ENCODE measurements at regions of chr9 and their contacts with region 1.

Region 1: GRCh38 chr9:136400038-136400834 is at the start of gene SNAPC4:
- DNase-seq: peak; percentile 77 to 91
- ATAC-seq: peak; percentile 89 to 95 (median 92)
- H3K4me3 ChIP-seq: peak within 1 kb of the TSS; percentile 77 to 99 (median 94)
- H3K27ac ChIP-seq: peak within 1 kb of the TSS in 9 of 10 donors; percentile 20 to 84 (median 62)
- H3K4me1 ChIP-seq: peaks cover 13 to 24% (median 18%) of the 10 kb centered on the region in 9 donors
- H3K27me3 ChIP-seq: no peaks in the 10 kb centered on the region
- CTCF ChIP-seq: peak; percentile 90 to 99 (median 97)
- total RNA-seq, gene SNAPC4: 3.4 to 6.1 (median 4.7) TPM

Region 2: GRCh38 chr9:136312436-136312835 is 87.8 kb before region 1 on chr9:
- intact Hi-C with region 1: loop called in 5 of 10 experiments (anchors 2 to 10 kb)
- DNase-seq: peak in 1 of 2 donors; percentile 56
- ATAC-seq: peak in 7 of 8 donors; percentile 71 to 82 (median 76)
- H3K4me3 ChIP-seq: no peak overlapping the region
- H3K27ac ChIP-seq: no peak overlapping the region
- H3K4me1 ChIP-seq: no peaks in the 10 kb centered on the region
- H3K27me3 ChIP-seq: peaks cover 0 to 34% (median 25%) of the 10 kb centered on the region in 7 donors
- CTCF ChIP-seq: peak; percentile 31 to 68 (median 61)

Region 3: DNA sequence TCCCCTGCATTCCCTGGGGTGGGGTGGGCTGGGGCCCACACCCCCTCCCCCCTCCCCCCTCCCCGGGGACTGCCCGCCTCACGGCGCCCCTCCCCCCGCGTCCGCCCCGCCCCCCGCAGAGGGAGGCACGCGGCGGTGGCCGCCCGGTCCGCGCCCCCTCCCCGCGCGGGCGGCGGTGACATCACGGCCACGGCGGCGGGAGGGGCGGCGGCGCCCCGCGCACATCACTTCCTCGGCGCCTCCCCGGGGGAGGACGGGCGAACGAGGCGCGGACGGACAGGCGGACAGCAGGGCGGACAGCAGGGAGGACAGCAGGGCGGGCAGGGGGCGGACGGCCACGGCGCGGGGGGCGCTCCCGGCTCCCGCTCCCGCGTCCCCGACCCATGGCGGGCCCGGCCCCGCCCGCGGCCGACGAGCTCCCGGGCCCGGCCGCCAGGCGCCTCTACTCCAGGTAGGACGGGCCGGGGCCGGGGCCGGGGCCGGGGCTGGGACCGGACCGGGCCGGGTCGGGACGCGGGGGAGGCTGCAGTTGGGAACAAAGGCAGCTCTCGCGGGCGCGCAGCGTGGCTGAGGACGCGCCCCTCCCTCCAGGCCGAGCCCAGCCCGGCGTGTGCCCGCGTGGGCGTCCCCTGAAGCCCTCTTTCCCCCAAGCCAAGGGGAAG is 72.8 kb before region 1 on chr9 and contains the start of gene GPSM1:
- intact Hi-C with region 1: loop called in 1 of 10 experiments (anchors 5 kb)
- DNase-seq: peak; percentile 66 to 73
- ATAC-seq: peak; percentile 2 to 54 (median 27)
- H3K4me3 ChIP-seq: peak within 1 kb of the TSS; percentile 55 to 91 (median 74)
- H3K27ac ChIP-seq: peak within 1 kb of the TSS; percentile 18 to 86 (median 83)
- H3K4me1 ChIP-seq: peaks cover 24 to 56% (median 39%) of the 10 kb centered on the region in 9 donors
- H3K27me3 ChIP-seq: peaks cover 0 to 23% (median 0%) of the 10 kb centered on the region in 7 donors
- CTCF ChIP-seq: no peak
- total RNA-seq, gene GPSM1: 19.4 to 50.2 (median 24.8) TPM

Region 4: DNA sequence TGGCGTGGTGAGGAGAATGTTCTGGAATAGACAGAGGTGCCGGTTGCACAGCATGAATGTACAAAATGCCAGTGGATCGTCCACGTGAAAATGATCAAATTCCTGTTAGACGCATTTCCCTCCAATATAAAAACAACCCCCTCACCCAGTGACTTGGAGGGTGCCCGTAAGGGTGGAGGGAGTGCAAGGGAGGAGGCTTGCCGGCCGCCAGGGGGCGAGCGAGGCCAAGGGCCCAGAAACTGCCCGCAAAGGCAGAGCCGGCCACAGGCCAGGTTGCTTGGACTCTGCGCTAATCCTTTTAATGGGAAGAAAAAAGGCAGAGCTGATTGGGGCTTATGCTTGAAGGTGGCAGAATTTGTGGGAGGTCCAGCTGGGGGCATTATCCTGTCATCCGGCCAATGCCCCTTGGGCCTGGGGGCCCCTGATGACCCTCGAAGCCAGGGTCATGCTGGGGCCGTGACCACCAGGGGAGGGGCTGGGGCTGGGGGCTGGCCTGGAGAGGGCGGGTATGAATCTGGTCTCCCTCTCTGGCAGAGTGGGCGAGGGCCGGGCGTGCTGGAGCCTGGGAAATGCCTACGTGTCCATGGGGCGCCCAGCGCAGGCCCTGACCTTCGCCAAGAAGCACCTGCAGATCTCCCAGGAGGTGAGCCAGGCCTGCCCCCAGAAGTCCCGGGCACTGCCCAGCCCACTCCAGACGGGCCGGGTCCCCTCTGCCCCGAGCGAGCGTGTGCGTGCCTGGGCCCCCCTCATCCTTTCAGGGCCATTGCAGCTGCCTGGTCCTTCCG is 60.9 kb before region 1 on chr9:
- intact Hi-C with region 1: loop called in 6 of 10 experiments (anchors 1 to 10 kb)
- DNase-seq: peak in 1 of 2 donors; percentile 79
- ATAC-seq: peak in 4 of 8 donors; percentile 23 to 53 (median 31)
- H3K4me3 ChIP-seq: no peak overlapping the region
- H3K27ac ChIP-seq: peak overlapping the region in 5 of 10 donors; percentile 14 to 90 (median 26)
- H3K4me1 ChIP-seq: peaks cover 9 to 42% (median 29%) of the 10 kb centered on the region in 9 donors
- H3K27me3 ChIP-seq: no peaks in the 10 kb centered on the region
- CTCF ChIP-seq: peak; percentile 76 to 91 (median 84)

Region 5: GRCh38 chr9:136363606-136364370 is 36.4 kb before region 1 on chr9 and contains the start of gene DNLZ:
- intact Hi-C with region 1: loop called in 1 of 10 experiments (anchors 2 kb)
- DNase-seq: peak; percentile 81 to 89
- ATAC-seq: peak; percentile 27 to 87 (median 51)
- H3K4me3 ChIP-seq: peak within 1 kb of the TSS; percentile 57 to 100 (median 75)
- H3K27ac ChIP-seq: peak within 1 kb of the TSS; percentile 83 to 100 (median 95)
- H3K4me1 ChIP-seq: peaks cover 13 to 53% (median 31%) of the 10 kb centered on the region in 9 donors
- H3K27me3 ChIP-seq: no peaks in the 10 kb centered on the region
- CTCF ChIP-seq: peak; percentile 95 to 100 (median 98)
- total RNA-seq, gene DNLZ: 23.3 to 39.5 (median 30.7) TPM

Measured in heart right ventricle (tissue), 16 donors.